Tibial artery (tissue), 4 donors: ENCODE measurements at regions of chr12 and their contacts with region 1.

Region 1: GRCh38 chr12:123365025-123365917 is 624 bp upstream of the SBNO1 start:
- DNase-seq: peak; percentile 97 to 99
- H3K4me3 ChIP-seq: peak overlapping the region; percentile 60 to 94
- H3K27ac ChIP-seq: peak overlapping the region; percentile 94 to 95
- H3K4me1 ChIP-seq: peaks cover 3 to 35% (median 14%) of the 10 kb centered on the region in 4 donors
- H3K27me3 ChIP-seq: no peaks in the 10 kb centered on the region
- CTCF ChIP-seq: peak; percentile 70 to 71

Region 2: DNA sequence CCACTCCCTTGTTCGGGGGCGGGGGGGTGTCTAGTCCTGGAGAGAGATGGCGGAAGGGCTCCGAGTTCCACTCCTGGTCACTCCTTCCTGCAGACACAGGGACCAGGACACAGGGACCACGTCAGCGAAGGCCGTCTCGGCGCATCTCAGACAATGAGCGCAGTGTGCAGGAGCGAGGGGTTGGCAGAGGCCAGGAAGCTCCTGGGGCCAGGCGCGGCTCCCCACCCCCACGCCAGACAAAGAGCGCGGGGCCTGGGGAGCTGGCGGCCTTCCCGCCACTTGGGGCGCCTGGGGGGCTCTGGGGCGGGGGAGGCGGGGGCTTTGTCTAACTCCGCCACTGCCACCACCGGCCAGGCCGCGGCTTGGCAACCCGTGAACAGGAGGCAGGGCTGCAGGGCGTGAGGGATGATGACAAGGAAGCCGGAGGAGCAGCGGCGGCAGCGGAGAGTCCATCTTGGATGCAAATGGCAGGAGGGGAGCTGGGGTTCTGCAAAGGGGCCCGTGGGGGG is 95.8 kb before region 1 on chr12:
- intact Hi-C with region 1: loop called (anchors 10 kb)
- DNase-seq: peak in 1 of 2 donors; percentile 66
- H3K4me3 ChIP-seq: peak overlapping the region; percentile 74 to 90
- H3K27ac ChIP-seq: peak overlapping the region; percentile 72 to 82
- H3K4me1 ChIP-seq: peaks cover 0 to 42% (median 29%) of the 10 kb centered on the region in 4 donors
- H3K27me3 ChIP-seq: no peaks in the 10 kb centered on the region
- CTCF ChIP-seq: no peak

Region 3: GRCh38 chr12:123337070-123337469 is 28.2 kb before region 1 on chr12:
- intact Hi-C with region 1: no loop called
- DNase-seq: no peak
- H3K4me3 ChIP-seq: no peak overlapping the region
- H3K27ac ChIP-seq: no peak overlapping the region
- H3K4me1 ChIP-seq: no peaks in the 10 kb centered on the region
- H3K27me3 ChIP-seq: no peaks in the 10 kb centered on the region
- CTCF ChIP-seq: no peak

Region 4: GRCh38 chr12:123382684-123383083 is 17.4 kb after region 1 on chr12:
- intact Hi-C with region 1: loop called (anchors 1 kb)
- DNase-seq: no peak
- H3K4me3 ChIP-seq: no peak overlapping the region
- H3K27ac ChIP-seq: no peak overlapping the region
- H3K4me1 ChIP-seq: peaks cover 0 to 18% (median 11%) of the 10 kb centered on the region in 4 donors
- H3K27me3 ChIP-seq: no peaks in the 10 kb centered on the region
- CTCF ChIP-seq: no peak

Region 5: GRCh38 chr12:123479442-123480180 is 114.3 kb after region 1 on chr12:
- intact Hi-C with region 1: loop called (anchors 10 kb)
- DNase-seq: peak in 1 of 2 donors; percentile 74
- H3K4me3 ChIP-seq: peak overlapping the region; percentile 38 to 41
- H3K27ac ChIP-seq: peak overlapping the region; percentile 90 to 92
- H3K4me1 ChIP-seq: peaks cover 0 to 76% (median 37%) of the 10 kb centered on the region in 4 donors
- H3K27me3 ChIP-seq: no peaks in the 10 kb centered on the region
- CTCF ChIP-seq: no peak

Region 6: DNA sequence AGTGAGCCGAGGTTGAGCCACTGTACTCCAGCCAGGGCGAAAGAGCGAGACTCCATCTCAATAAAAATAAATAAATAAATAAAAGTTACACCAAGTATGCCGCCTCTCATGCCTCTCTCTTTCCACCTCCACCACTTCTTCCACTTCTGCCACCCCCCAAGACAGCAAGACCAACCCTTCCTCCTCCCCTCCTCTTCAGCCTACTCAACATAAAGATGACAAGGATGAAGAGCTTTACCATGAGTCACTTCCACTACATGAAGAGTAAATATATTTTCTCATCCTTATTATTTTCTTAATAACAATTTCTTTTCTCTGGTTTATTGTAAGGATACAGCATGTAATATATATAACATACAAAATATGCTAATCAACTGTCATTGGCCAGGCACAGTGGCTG is 215.5 kb after region 1 on chr12:
- intact Hi-C with region 1: loop called (anchors 5 kb)
- DNase-seq: no peak
- H3K4me3 ChIP-seq: no peak overlapping the region
- H3K27ac ChIP-seq: no peak overlapping the region
- H3K4me1 ChIP-seq: peaks cover 0 to 32% (median 19%) of the 10 kb centered on the region in 4 donors
- H3K27me3 ChIP-seq: no peaks in the 10 kb centered on the region
- CTCF ChIP-seq: no peak